Spleen (tissue), 13 donors: ENCODE measurements at regions of chr9 and their contacts with region 1.

Region 1: GRCh38 chr9:114348906-114349482 is 19.3 kb downstream of the ORM2 start:
- DNase-seq: peak; percentile 92
- H3K4me3 ChIP-seq: no peak overlapping the region
- H3K27ac ChIP-seq: peak overlapping the region; percentile 27 to 84 (median 60)
- H3K4me1 ChIP-seq: peaks cover 8 to 67% (median 43%) of the 10 kb centered on the region in 6 donors
- H3K27me3 ChIP-seq: no peaks in the 10 kb centered on the region
- CTCF ChIP-seq: no peak
- POLR2A ChIP-seq: no peak

Region 2: DNA sequence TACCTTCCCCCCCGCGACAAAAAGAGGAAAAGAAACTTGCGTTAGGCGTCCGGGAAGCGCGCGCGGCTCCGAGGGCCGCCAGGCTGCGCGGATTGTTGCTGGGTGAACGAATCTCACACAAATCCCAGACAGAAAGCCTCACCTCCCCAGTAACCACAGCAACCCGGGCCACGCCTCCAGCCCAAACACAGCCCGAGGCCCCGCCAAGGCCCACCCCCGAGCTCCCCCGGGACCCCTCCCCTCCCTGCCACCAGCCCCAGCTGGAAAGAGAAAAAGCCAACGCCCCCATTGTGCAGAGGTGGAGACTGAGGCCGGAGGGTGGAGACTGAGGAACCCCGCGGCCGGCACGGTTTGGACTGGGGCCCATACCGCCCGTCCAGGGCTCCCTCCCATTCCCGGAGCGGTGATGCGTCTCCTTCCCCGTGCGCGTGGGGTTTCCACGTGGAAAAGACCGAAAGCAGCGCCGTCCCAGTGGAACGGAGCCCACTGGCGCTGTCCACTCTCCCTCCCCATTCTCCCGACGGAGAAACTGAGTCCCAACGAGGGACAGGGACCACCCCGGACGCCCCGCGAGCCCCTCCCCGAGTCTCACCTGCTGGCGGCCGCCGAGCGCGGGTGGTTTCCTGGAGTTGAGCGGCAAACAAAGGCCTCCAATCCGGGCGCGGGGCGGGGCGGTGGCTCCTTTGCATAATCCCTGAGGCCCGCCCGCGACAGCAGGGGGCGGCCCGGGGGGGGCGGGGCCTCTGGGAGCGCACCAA is 49.0 kb after region 1 on chr9:
- intact Hi-C with region 1: loop called (anchors 10 kb)
- DNase-seq: peak; percentile 99
- H3K4me3 ChIP-seq: peak overlapping the region; percentile 72 to 99 (median 93)
- H3K27ac ChIP-seq: peak overlapping the region; percentile 86 to 99 (median 95)
- H3K4me1 ChIP-seq: peaks cover 41 to 62% (median 51%) of the 10 kb centered on the region in 6 donors
- H3K27me3 ChIP-seq: no peaks in the 10 kb centered on the region
- CTCF ChIP-seq: peak in 7 of 11 experiments; percentile 16 to 63 (median 35)
- POLR2A ChIP-seq: peak in 2 of 3 donors; percentile 59 to 81

Region 3: GRCh38 chr9:114551883-114552685 is 203.1 kb after region 1 on chr9:
- intact Hi-C with region 1: no loop called
- DNase-seq: no peak
- H3K4me3 ChIP-seq: no peak overlapping the region
- H3K27ac ChIP-seq: peak overlapping the region in 1 of 8 donors; percentile 18
- H3K4me1 ChIP-seq: peaks cover 0 to 11% (median 0%) of the 10 kb centered on the region in 6 donors
- H3K27me3 ChIP-seq: no peaks in the 10 kb centered on the region
- CTCF ChIP-seq: no peak
- POLR2A ChIP-seq: no peak